ENCODE measurements at regions of chr4 and their contacts with region 1.

Region 1: DNA sequence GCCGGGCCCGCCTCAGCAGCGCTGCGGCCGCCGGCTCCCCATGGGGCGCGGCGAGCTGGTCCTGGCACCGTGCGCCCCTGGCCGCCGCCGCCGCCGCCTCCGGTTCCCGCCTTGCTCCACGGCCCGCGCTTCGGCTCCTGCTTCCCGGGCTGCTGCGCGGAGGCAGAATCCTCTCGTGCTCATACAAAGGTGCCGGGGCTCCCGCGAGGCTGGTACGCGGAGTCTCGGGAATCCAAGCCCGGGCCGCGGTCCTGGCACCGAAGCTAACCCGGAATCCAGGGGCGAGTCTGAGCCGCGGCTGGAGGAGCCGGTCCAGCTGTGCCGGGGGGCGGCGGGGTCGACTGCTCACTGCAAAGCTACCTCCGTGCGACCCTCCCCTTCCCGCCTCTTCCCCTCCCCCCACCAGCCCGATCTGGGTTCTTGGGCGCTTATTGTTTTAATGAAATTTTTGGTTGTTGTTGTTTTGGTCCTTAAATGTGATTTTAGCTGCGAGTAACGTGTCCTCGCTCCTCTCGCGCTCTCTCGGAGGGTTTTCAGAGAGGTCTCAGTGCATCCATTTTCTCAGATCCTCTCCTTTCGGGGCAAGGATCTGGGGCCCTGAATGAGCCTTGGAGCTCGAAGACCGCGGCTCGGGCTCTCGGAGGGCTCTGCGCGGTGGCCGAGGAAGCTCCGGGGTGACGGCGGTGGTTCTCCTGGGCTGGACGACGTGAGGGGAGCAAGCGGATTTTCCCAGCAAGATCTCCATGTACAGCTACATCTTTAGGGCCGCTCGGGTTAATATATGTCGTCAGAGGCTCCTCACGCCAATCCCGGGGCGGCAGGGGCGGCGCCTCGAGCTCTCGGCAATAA is at the start of gene HAND2:
- DNase-seq: peak; percentile 89 to 96 (median 94)
- ATAC-seq: peak; percentile 85
- H3K4me3 ChIP-seq: peak within 1 kb of the TSS; percentile 59
- H3K27ac ChIP-seq: peak within 1 kb of the TSS; percentile 95
- H3K4me1 ChIP-seq: no peaks in the 10 kb centered on the region
- H3K27me3 ChIP-seq: no peaks in the 10 kb centered on the region
- total RNA-seq, gene HAND2: 69.3 to 154 (median 136) TPM

Region 2: DNA sequence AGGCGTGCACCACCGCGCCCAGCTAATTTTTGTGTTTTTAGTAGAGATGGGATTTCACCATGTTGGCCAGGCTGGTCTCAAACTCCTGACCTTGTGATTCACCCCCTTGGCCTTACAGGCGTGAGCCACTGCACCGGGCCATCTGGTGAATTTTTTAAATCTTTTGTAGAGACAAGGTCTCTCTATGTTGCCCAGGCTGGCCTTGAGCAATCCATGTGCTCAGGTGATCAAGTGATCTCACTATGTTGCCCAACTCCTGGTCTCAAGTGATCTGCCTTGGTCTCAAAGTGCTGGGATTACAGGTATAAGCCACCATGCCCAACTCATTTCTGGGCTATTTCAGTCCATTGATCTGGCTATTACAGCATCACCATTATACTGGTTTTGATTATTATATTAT is 383.2 kb before region 1 on chr4:
- intact Hi-C with region 1: no loop called
- DNase-seq: no peak
- ATAC-seq: no peak
- H3K4me3 ChIP-seq: no peak overlapping the region
- H3K27ac ChIP-seq: no peak overlapping the region
- H3K4me1 ChIP-seq: no peaks in the 10 kb centered on the region
- H3K27me3 ChIP-seq: no peaks in the 10 kb centered on the region

Region 3: GRCh38 chr4:173698557-173699262 is 169.0 kb after region 1 on chr4:
- intact Hi-C with region 1: loop called in 1 of 4 experiments (anchors 10 kb)
- DNase-seq: peak; percentile 57 to 83 (median 76)
- ATAC-seq: peak; percentile 95
- H3K4me3 ChIP-seq: no peak overlapping the region
- H3K27ac ChIP-seq: peak overlapping the region; percentile 81
- H3K4me1 ChIP-seq: no peaks in the 10 kb centered on the region
- H3K27me3 ChIP-seq: no peaks in the 10 kb centered on the region

Region 4: GRCh38 chr4:173752610-173753230 is 223.0 kb after region 1 on chr4:
- intact Hi-C with region 1: loop called (anchors 5 to 10 kb)
- DNase-seq: no peak
- ATAC-seq: no peak
- H3K4me3 ChIP-seq: no peak overlapping the region
- H3K27ac ChIP-seq: no peak overlapping the region
- H3K4me1 ChIP-seq: peaks cover 2% of the 10 kb centered on the region
- H3K27me3 ChIP-seq: no peaks in the 10 kb centered on the region

Region 5: GRCh38 chr4:173990126-173990868 is 460.6 kb after region 1 on chr4:
- intact Hi-C with region 1: loop called in 2 of 4 experiments (anchors 5 kb)
- DNase-seq: no peak
- ATAC-seq: peak; percentile 81 to 86
- H3K4me3 ChIP-seq: peak overlapping the region; percentile 30
- H3K27ac ChIP-seq: peak overlapping the region; percentile 79
- H3K4me1 ChIP-seq: no peaks in the 10 kb centered on the region
- H3K27me3 ChIP-seq: no peaks in the 10 kb centered on the region

Measured in right cardiac atrium (tissue), 5 donors.